GM18951 (cell line): ENCODE measurements at regions of chr12 and their contacts with region 1.

Region 1: GRCh38 chr12:57909611-57910010 is 31.8 kb upstream of the ATP23 start:
- POLR2A ChIP-seq: no peak

Region 2: DNA sequence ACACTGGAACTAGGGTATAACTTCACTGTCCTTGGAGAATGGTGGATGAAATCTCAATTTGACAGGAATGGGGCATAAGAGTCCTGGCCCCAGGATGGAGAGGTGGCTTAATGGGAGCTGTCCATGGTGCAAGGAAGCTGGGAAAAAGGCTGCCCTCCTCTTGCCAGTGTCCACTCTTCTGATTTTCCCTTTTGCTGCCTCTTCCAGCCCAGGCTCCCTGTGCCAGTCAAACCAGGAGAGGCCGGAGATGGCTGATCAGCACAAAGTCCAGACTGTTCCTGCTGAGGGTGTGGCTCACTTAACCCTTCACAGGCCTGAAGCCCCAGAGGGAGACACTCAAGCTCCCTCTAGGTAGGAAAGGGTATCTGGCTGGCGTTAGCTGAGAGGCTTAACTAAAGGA is 859.7 kb before region 1 on chr12 and contains the start of gene MYO1A:
- in situ Hi-C with region 1: no loop called
- POLR2A ChIP-seq: no peak

Region 3: DNA sequence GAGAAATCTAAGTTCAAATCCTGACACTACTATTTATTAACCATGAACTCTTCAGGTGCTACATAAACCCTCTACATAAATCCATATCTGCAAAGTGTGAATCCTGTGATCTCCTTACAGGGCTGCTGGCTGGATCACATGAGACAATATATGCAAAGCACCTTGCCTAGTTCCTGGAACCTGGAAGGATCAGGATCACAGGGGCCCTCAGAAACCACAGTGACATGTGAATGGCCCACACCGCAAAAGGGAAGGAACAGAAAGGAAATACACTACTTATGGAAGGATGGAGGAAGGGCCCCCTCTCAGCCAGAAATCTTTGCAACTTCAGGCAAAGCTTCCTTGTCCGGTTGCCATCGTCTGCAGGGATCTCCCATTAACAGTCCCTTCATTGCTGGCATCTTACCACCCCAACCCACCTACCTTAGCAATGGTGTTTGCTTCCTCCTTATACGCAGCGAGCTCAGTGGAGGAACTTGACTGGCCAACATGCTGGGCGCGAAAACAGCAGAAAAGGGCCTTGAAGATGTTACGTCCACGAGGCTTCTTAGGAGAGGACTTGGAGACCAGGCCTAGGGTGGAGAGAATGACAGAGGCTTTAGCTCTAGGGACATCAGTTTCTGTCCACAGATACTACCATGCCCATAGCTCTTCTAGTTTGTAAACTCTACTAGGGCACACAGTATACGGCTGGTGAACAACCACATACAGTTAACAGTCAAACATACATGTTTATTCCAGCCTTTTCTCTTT is 80.4 kb before region 1 on chr12:
- in situ Hi-C with region 1: loop called (anchors 5 kb)
- POLR2A ChIP-seq: no peak